A549 (cell line): ENCODE measurements at regions of chr19 and their contacts with region 1.

Region 1: GRCh38 chr19:5070930-5071329 is 102.0 kb downstream of the KDM4B start:
- DNase-seq: no peak
- ATAC-seq: no peak
- H3K4me3 ChIP-seq: no peak overlapping the region
- H3K27ac ChIP-seq: no peak overlapping the region
- H3K4me1 ChIP-seq: no peaks in the 10 kb centered on the region
- CTCF ChIP-seq: no peak
- EP300 ChIP-seq: no peak
- POLR2A ChIP-seq: no peak
- RAD21 ChIP-seq: no peak

Region 2: DNA sequence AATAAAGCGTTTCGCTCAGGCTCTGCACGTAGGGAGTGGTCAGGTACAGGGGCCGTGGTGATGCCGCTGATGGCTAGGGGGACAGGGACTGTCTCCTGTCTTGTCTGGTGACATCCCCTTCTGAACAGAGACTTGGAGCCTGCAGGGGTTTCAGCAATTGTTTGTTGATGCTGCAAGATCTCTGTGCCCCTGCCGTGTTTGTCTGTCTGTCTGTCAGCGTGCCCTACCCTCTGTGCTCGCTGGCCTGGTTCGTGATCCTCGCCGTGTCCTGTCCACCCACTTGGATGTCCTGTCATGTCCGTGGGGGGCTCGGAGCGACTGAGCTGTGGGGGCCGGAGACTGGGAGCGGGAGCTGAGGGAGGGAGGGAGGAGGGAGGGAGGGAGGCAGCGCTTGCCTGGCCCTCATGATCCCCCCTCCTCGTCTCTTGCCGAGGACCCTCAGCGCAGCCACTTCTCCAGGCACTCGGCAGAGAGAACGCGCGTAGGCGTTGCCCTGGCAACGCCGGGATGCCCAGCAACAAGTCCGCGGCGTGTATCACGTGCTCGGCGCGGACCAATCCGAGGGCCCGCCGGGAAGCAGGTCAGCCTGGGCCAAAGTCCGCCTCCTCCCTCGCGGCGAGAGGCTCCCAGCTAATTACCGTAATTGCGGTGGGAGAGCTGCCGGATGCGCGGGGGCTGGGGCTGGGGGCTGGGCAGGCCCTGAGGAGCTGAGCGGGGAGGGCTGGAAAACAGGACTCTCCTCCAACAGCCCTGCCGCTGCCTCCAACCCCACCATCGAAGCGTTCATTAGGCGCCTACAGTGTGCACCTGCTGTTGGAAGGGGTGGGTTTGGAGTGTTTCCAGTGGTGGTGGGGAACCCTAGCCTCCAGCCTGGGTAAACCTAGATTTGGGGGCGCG is 311.3 kb before region 1 on chr19:
- CTCF ChIA-PET with region 1: no interaction called
- POLR2A ChIA-PET with region 1: no interaction called
- DNase-seq: peak; percentile 81 to 95
- ATAC-seq: peak; percentile 93 to 98
- H3K4me3 ChIP-seq: peak overlapping the region; percentile 44
- H3K27ac ChIP-seq: peak overlapping the region; percentile 29 to 74; a peak in 3 of 6 replicates
- H3K4me1 ChIP-seq: peaks cover 7% of the 10 kb centered on the region; the same call in 1 of the 3 replicates
- CTCF ChIP-seq: no peak
- EP300 ChIP-seq: no peak
- POLR2A ChIP-seq: no peak
- RAD21 ChIP-seq: no peak

Region 3: DNA sequence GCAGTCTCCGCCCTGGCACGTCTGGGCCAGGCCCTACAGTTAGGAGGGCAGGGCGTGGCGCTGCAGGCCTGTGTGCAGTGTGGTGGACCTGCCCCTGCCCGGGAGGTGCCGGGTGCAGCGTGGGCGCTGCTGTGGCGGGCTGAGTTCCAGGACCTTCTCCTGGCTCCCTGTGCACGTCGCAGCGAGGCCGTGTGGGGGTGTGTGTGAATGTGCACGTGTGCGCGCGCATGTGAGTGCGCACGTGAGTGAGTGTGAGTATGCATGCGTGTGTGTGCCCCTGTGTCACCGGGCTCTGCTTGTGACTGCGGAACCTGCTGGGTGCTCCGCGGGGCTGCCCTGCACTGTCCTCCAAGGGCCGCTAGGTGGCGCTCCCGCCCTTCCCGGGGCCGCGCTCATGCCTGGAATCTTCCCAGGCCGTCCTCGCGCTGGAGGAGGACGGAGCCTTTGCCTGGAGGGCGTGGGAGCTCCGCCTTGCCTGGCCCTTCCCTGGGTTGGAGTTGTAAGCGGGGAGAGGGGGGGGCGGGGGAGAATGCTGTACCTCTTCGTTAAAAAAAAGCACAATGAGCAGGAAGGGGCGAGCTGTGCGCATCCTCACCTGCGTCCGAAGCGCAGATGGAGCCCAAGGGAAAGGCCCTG is 22.7 kb before region 1 on chr19:
- CTCF ChIA-PET with region 1: interaction called, 11 read pairs
- POLR2A ChIA-PET with region 1: no interaction called
- DNase-seq: peak; percentile 70 to 86
- ATAC-seq: peak; percentile 74 to 88
- H3K4me3 ChIP-seq: 0 out of 3 replicates have a peak overlapping the region, but pooled peaks have one; percentile 21
- H3K27ac ChIP-seq: peak overlapping the region; percentile 94 to 98
- H3K4me1 ChIP-seq: peaks cover 50% of the 10 kb centered on the region
- CTCF ChIP-seq: peak; percentile 74
- EP300 ChIP-seq: no peak
- POLR2A ChIP-seq: no peak
- RAD21 ChIP-seq: peak; percentile 90 to 94